ENCODE measurements at regions of chr10 and their contacts with region 1.

Region 1: DNA sequence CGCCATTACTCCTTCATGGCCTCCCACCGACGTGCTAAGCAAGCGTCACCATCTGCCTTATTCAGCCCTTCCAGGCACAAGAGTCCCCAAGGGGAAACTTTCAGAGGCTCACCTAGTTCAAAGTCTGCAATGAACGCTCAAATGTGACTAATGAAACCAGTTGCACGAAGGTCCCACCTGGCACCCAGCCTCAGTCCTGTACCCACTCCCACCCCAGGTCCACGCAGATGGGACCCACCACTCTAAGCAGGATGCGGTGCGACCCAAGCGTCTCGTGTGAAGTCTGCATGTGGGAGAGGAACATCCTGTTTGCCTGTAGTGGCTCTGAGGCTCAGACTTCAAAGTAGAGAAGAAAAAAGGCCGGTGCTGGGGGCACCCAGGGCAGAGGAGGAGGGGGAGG is 40.3 kb downstream of the RGS10 start:
- DNase-seq: peak; percentile 71
- H3K4me3 Mint-ChIP-seq: peak overlapping the region; percentile 53
- H3K27ac Mint-ChIP-seq: peak overlapping the region; percentile 83
- H3K4me1 Mint-ChIP-seq: peaks cover 74% of the 10 kb centered on the region
- H3K27me3 Mint-ChIP-seq: no peaks in the 10 kb centered on the region

Region 2: DNA sequence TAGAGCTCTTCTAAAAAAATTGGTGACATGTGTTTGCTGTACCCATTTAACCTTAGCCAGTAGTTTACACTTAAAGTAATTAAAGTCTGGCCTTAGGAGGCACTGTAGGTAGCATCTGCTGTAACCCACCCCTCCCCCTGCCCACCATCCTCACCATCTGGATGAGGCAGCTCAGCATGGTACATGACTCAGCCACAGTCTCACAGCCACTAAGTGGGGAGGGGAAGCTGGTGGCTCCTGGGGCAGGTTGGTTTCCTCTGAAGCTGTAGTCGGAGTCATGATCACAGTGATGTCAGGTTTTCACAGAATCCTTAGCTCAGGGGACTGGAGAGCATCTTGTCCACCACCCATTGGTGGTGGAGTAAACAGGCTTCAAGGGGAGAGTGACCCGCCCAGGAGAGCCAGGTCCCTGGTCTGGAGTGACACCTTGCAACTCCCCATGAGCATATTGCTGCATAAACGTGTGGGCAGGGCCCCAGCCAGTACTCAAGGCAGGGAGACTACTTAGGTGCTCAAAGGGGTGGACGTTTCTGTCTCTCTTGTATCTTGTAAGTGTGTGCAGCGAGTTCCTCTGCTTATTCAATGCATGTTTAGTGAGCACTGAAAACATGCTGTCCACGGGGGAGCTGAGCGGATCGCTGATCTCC is 168.9 kb before region 1 on chr10:
- intact Hi-C with region 1: no loop called
- DNase-seq: no peak
- H3K4me3 Mint-ChIP-seq: no peak overlapping the region
- H3K27ac Mint-ChIP-seq: no peak overlapping the region
- H3K4me1 Mint-ChIP-seq: peaks cover 15% of the 10 kb centered on the region
- H3K27me3 Mint-ChIP-seq: no peaks in the 10 kb centered on the region

Region 3: GRCh38 chr10:119517235-119518141 is 15.3 kb after region 1 on chr10:
- intact Hi-C with region 1: loop called (anchors 1 kb)
- DNase-seq: peak; percentile 51
- H3K4me3 Mint-ChIP-seq: peak overlapping the region; percentile 47
- H3K27ac Mint-ChIP-seq: peak overlapping the region; percentile 77
- H3K4me1 Mint-ChIP-seq: peaks cover 36% of the 10 kb centered on the region
- H3K27me3 Mint-ChIP-seq: no peaks in the 10 kb centered on the region

Measured in activated T-helper 2 cell treated with anti-CD3 and anti-CD28 coated beads, Interferon-gamma antibody, Interleukin-2, Interleukin-4, amounts not matched to agents 10 μg/mL and 5 μg/mL and 100 μg/mL, durations not matched to agents 14 hours and 24 hours and 36 hours (primary cell).